ENCODE measurements at regions of chr2 and their contacts with region 1.

Region 1: GRCh38 chr2:33267756-33268155 is 208.7 kb upstream of the RASGRP3 start:
- DNase-seq: no peak
- H3K4me3 ChIP-seq: no peak overlapping the region
- H3K27ac ChIP-seq: peak overlapping the region in 2 of 4 donors; percentile 1 to 8
- H3K4me1 ChIP-seq: peaks cover 4 to 33% (median 32%) of the 10 kb centered on the region in 4 donors
- H3K27me3 ChIP-seq: no peaks in the 10 kb centered on the region
- CTCF ChIP-seq: no peak
- EP300 ChIP-seq: no peak
- POLR2A ChIP-seq: no peak

Region 2: DNA sequence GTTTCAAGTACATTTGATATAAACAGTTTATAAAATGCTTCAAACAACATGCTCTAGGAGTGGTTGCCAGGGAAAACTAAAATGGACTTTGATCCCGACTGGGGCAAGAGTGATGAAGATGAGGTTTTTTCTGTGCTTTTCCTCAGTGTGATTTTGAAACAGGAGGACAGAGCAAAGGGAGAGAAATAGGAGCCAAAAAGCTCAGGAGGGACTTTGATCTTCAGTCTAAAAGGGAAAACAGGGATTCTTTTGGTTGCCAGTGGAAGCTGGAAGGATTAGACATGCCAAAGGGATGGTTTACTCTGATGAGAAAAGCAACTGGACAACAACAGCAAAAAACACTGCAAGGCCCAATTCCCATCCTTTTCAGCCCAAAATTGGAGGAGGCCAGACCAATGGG is 225.5 kb before region 1 on chr2:
- intact Hi-C with region 1: loop called (anchors 5 kb)
- DNase-seq: no peak
- H3K4me3 ChIP-seq: no peak overlapping the region
- H3K27ac ChIP-seq: peak overlapping the region; percentile 43 to 70 (median 54)
- H3K4me1 ChIP-seq: peaks cover 12 to 42% (median 33%) of the 10 kb centered on the region in 4 donors
- H3K27me3 ChIP-seq: no peaks in the 10 kb centered on the region
- CTCF ChIP-seq: no peak
- EP300 ChIP-seq: no peak
- POLR2A ChIP-seq: no peak

Region 3: DNA sequence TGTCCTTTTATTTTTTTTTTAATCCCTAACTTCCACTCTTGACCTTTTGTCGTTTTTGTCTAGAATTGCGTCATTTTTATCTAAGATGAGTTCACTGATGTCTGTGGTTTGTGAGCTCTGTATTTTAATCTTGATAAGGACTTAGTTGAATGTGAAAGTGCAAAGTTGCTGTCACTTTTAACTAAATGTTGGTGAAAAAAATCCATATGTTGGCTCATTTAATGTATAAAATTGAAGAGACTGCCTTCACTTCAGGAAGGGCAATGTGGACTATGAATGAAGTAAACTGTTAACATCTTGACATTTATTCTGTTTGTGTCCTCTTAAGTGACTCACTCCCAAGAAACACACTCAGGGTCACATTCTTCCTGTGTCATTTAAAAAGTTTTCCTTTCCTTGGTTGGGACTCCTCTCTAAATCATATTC is 47.9 kb before region 1 on chr2:
- intact Hi-C with region 1: loop called (anchors 5 kb)
- DNase-seq: no peak
- H3K4me3 ChIP-seq: no peak overlapping the region
- H3K27ac ChIP-seq: peak overlapping the region in 3 of 4 donors; percentile 4 to 32 (median 13)
- H3K4me1 ChIP-seq: peaks cover 31 to 54% (median 41%) of the 10 kb centered on the region in 4 donors
- H3K27me3 ChIP-seq: no peaks in the 10 kb centered on the region
- CTCF ChIP-seq: no peak
- EP300 ChIP-seq: no peak
- POLR2A ChIP-seq: no peak

Region 4: DNA sequence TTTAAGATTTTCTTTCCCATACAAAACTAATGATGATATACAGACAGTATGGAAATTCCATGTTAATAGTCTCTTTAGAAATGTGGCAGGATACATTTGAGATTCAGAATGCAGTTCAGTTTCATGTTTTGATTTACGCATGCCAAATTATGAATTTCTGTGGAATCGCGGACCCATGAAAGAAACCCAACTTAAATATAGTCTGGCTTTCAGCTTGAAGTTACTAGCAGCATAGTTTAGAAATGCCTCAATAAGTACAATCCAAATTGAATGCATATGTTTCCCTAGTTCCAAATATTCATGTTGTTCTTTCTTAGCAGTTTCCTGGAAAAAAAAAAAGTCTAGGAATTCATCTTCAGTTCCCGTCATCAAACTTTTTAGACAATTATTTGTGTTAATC is 44.6 kb after region 1 on chr2:
- intact Hi-C with region 1: no loop called
- DNase-seq: no peak
- H3K4me3 ChIP-seq: no peak overlapping the region
- H3K27ac ChIP-seq: peak overlapping the region; percentile 21 to 61 (median 61)
- H3K4me1 ChIP-seq: peaks cover 0 to 52% (median 47%) of the 10 kb centered on the region in 4 donors
- H3K27me3 ChIP-seq: no peaks in the 10 kb centered on the region
- CTCF ChIP-seq: no peak
- EP300 ChIP-seq: no peak
- POLR2A ChIP-seq: no peak